A673 (cell line): ENCODE measurements at regions of chr6 and their contacts with region 1.

Region 1: DNA sequence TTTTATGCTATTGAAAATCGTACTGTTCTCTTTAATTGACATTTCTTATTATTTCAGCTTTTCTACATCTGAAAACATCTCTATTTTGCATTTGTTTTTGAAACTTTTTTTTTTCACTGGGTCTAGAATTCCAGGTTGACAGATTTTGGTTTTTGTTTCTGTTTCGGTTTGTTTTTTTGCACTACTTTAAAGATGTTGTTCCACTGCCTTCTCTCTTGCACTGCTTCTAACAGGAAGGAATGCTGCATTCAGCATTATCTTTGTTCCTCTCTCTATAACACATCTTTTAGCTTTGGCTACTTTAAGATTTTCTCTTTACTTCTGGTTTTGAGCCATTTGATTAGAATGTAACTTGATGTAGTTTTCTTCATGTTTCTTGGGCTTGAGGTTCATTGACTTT is 20.1 kb upstream of the SLC17A1 start:
- DNase-seq: no peak
- H3K4me3 ChIP-seq: no peak overlapping the region
- H3K27ac ChIP-seq: no peak overlapping the region
- H3K4me1 ChIP-seq: no peaks in the 10 kb centered on the region
- H3K27me3 ChIP-seq: peaks cover 10% of the 10 kb centered on the region
- CTCF ChIP-seq: no peak

Region 2: DNA sequence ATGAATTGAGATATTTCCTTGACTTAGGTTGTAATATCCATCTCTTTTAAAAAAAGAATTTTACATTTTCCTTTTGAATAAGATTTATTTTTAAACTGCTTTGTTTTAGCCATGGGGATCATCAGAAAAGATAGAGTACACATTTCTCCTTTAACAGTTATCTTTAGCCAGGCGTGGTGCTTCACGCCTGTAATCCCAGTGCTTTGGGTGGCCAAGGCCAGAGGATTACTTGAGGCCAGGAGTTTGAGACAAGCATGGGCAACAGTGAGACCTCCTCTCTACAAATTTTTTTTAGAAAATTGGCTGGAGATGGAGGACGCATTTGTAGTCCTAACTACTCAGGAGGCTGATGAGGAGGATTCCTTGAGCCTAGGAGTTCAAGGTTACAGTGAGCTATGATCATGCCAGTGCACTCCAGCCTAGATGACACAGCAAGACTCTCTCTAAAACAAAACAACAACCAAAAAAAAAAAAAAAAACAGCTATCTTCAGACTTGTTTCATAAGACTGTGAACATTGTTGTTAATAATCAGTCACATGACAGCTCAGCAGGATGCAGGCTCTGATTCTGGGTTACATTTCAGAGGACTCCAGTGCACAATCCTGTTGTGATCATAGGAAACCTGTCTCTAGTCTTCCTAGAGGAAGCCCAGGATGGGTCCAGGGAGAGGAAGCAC is 24.1 kb after region 1 on chr6:
- CTCF ChIA-PET with region 1: no interaction called
- POLR2A ChIA-PET with region 1: interaction called, 21 read pairs
- intact Hi-C with region 1: no loop called
- DNase-seq: no peak
- H3K4me3 ChIP-seq: no peak overlapping the region
- H3K27ac ChIP-seq: no peak overlapping the region
- H3K4me1 ChIP-seq: no peaks in the 10 kb centered on the region
- H3K27me3 ChIP-seq: no peaks in the 10 kb centered on the region
- CTCF ChIP-seq: no peak